ENCODE measurements at regions of chr6 and their contacts with region 1.

Region 1: GRCh38 chr6:45377554-45378333 is at the start of gene SUPT3H:
- DNase-seq: peak; percentile 88
- H3K4me3 Mint-ChIP-seq: peak within 1 kb of the TSS; percentile 96
- H3K27ac Mint-ChIP-seq: peak within 1 kb of the TSS; percentile 100
- H3K4me1 Mint-ChIP-seq: peaks cover 27% of the 10 kb centered on the region
- H3K27me3 Mint-ChIP-seq: no peaks in the 10 kb centered on the region
- total RNA-seq, gene SUPT3H: 11.0 and 11.7 TPM in 2 replicates

Region 2: DNA sequence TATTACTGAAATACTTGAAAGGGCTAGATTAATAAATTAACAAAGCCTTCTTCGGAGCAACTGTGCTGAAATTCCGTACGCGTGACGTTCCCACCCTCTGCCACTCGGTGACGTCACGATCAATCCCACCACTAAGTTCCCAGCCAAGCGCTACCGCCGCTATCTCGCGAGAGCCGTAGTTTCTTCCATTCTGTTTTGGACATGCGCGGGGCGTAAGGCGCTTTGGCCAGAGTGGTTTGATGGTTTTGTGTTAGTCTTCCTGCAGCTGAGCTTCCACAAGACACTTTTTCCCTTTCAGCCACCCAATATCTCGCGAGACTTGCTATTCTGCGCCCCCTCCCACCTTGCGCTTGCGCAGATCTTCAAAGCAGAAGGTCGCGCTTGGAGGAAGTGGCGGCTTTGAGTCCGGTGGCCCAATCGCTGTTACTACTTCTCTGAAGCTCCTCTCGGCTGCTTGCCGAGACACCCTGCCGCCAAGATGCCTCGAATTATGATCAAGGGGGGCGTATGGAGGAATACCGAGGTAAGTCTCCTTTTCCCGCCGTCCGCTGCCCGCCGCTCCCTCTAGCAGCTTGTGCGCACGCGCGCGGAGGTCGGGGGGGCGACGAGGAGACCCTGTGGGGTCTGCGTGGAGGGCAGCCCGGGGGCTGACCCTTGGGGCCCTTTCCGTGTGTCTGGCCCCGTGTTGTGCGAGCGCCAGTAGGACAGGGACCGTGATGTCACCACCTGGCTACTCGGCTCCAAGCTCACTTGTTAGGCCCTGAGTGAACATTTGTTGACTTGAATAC is 990.2 kb before region 1 on chr6 and contains the start of gene CDC5L:
- intact Hi-C with region 1: loop called (anchors 5 kb)
- DNase-seq: peak; percentile 93
- H3K4me3 Mint-ChIP-seq: peak within 1 kb of the TSS; percentile 97
- H3K27ac Mint-ChIP-seq: peak within 1 kb of the TSS; percentile 99
- H3K4me1 Mint-ChIP-seq: peaks cover 40% of the 10 kb centered on the region
- H3K27me3 Mint-ChIP-seq: peaks cover 3% of the 10 kb centered on the region
- total RNA-seq, gene CDC5L: 28.1 and 28.4 TPM in 2 replicates

Region 3: GRCh38 chr6:44976719-44977641 is 400.8 kb before region 1 on chr6:
- intact Hi-C with region 1: loop called (anchors 5 kb)
- DNase-seq: no peak
- H3K4me3 Mint-ChIP-seq: peak overlapping the region; percentile 4
- H3K27ac Mint-ChIP-seq: peak overlapping the region; percentile 84
- H3K4me1 Mint-ChIP-seq: peaks cover 43% of the 10 kb centered on the region
- H3K27me3 Mint-ChIP-seq: no peaks in the 10 kb centered on the region

Region 4: GRCh38 chr6:45156075-45156474 is 221.7 kb before region 1 on chr6:
- intact Hi-C with region 1: loop called (anchors 2 kb)
- DNase-seq: peak; percentile 47
- H3K4me3 Mint-ChIP-seq: no peak overlapping the region
- H3K27ac Mint-ChIP-seq: peak overlapping the region; percentile 53
- H3K4me1 Mint-ChIP-seq: peaks cover 56% of the 10 kb centered on the region
- H3K27me3 Mint-ChIP-seq: no peaks in the 10 kb centered on the region

Region 5: GRCh38 chr6:45297320-45297719 is 80.4 kb before region 1 on chr6:
- intact Hi-C with region 1: no loop called
- DNase-seq: no peak
- H3K4me3 Mint-ChIP-seq: no peak overlapping the region
- H3K27ac Mint-ChIP-seq: no peak overlapping the region
- H3K4me1 Mint-ChIP-seq: peaks cover 45% of the 10 kb centered on the region
- H3K27me3 Mint-ChIP-seq: no peaks in the 10 kb centered on the region

Region 6: GRCh38 chr6:45310118-45310788 is 67.5 kb before region 1 on chr6:
- intact Hi-C with region 1: loop called (anchors 1 kb)
- DNase-seq: peak; percentile 19
- H3K4me3 Mint-ChIP-seq: peak overlapping the region; percentile 45
- H3K27ac Mint-ChIP-seq: peak overlapping the region; percentile 60
- H3K4me1 Mint-ChIP-seq: peaks cover 42% of the 10 kb centered on the region
- H3K27me3 Mint-ChIP-seq: no peaks in the 10 kb centered on the region

Region 7: DNA sequence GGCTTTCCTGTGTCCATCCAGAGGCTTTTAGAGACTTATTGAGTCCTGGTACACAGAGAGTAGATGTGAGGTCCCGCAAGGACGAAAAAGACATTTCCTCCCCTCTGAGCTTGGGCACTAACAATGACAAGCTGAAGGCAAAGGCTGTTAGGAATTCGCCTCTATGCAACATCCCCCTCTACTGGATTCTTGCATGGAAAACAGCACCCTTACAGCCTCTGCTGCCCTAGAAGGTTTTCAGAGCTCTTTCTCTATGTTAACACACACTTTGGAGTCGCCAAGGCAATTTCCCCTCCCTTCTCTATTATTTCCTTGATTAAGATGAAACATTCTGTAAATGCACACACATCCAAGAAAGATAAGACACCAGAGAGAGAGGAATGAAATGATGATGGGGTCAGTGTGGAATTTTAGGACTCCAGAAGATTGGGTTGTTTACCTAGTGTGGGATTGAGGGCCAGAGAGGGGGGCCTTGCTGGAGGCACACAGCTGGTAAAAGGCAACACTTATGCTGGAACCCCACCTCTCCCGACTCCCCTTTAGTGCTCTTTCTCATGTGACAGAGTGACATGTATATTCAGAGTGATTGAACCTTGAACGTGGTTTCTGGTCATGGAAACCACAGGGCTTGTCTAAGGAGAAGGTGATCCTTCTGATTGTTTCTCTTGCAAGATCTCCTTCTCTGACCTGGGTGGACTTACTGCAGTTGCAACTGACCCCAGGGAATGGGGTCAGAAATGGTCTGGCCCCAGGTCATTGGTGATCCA is 337.2 kb after region 1 on chr6:
- intact Hi-C with region 1: loop called (anchors 1 kb)
- DNase-seq: peak; percentile 46
- H3K4me3 Mint-ChIP-seq: no peak overlapping the region
- H3K27ac Mint-ChIP-seq: peak overlapping the region; percentile 73
- H3K4me1 Mint-ChIP-seq: peaks cover 38% of the 10 kb centered on the region
- H3K27me3 Mint-ChIP-seq: peaks cover 2% of the 10 kb centered on the region

Region 8: DNA sequence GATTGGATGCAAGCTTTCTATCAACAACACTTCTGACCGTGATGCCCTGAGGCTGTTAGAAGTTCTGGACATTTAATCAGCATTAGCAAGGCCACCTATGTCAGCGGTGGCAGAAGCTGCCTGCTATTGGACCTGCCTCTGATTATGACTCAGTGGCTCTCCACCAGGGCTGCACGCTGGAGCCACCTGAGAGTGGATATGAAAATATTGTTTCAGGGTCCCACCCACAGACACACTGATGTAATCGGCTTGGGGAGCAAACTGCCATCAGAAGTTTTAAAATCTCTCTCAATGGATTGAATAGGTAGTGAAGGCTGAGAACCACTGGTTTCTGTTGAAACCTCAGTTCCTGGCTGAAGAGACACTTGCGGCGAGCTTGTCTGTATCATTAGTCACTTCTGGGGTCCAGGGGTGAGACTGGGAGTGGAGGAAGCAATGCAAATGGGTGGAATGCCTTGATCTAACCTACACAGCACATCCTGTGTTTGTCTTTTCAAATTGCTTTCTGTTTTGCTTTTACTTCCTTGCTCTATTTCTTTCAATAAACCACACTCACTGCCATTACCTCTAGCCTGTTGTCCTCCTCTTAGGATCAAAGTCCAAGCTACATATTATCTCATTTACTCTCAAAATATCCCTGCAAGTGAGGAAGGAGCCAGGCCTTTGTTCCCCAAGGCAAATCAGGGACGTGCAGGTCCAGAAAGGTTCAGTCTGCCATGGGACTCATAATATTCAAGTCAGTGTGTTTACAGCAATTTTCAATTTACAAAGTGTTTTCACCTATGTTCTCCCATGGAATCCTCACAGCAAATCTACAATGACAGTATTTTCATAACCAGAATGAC is 633.7 kb after region 1 on chr6:
- intact Hi-C with region 1: loop called (anchors 1 kb)
- DNase-seq: peak; percentile 63
- H3K4me3 Mint-ChIP-seq: peak overlapping the region; percentile 47
- H3K27ac Mint-ChIP-seq: peak overlapping the region; percentile 74
- H3K4me1 Mint-ChIP-seq: peaks cover 55% of the 10 kb centered on the region
- H3K27me3 Mint-ChIP-seq: peaks cover 11% of the 10 kb centered on the region

Measured in activated T-helper 1 cell treated with anti-CD3 and anti-CD28 coated beads, Interleukin-12 subunit alpha, Interleukin-12 subunit beta, Interleukin-2, Interleukin-4 antibody, amounts not matched to agents 30 ng/mL and 10 ng/mL and 1 ng/mL, durations not matched to agents 14 hours and 24 hours and 36 hours (primary cell).